Heart right ventricle (tissue), 16 donors: ENCODE measurements at regions of chr13 and their contacts with region 1.

Region 1: DNA sequence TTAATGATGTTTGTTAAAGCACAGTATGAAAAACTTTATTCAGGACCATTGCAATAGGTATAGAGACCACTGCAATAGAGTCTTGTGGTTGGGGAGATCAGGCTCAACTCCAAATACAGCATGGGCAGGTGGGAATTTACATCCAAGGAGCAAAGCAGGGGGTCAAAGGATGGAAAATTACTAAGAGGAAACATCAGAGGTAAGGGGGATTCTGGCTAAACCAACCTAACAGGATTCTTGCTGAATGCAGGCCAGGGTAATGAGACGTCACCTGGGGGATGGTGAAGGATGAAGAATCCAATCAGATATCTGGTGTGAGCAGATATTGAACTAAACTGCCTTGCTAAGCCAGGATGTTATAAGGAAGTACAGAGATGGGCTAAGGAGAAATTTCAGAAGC is 126.6 kb upstream of the MIR17HG start:
- DNase-seq: no peak
- ATAC-seq: no peak
- H3K4me3 ChIP-seq: no peak overlapping the region
- H3K27ac ChIP-seq: no peak overlapping the region
- H3K4me1 ChIP-seq: no peaks in the 10 kb centered on the region
- H3K27me3 ChIP-seq: peaks cover 0 to 6% (median 0%) of the 10 kb centered on the region in 7 donors
- CTCF ChIP-seq: no peak

Region 2: DNA sequence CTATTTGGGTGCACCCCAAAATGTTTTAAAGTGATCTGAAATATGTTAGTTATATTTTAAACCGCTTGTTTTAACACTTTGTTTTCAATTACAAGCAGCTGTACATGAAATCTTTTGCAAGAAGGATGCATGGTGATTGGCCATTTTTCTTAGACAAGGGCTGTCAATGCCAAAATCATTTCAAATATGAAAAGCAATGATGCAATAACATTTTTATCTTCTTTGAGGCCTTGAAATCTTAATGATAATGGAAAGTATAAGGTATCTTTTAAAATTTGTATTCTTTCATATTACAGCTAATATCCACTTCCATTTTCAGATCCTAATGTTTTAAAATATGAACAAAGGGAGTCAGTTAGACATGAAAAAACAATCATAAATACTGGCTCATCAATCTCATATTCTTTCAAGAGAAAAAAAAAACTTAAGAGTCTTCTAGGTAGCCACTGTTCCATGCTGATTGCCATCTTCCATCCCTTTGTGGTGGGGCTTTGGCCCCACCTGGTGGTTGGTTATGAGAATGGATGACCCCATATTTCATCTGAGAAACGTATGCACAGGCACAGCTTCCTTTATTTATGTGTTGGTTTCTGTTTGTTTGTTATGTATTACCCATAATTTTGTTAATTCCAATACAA is 203.7 kb before region 1 on chr13:
- intact Hi-C with region 1: no loop called
- DNase-seq: no peak
- ATAC-seq: peak in 1 of 8 donors; percentile 50
- H3K4me3 ChIP-seq: no peak overlapping the region
- H3K27ac ChIP-seq: no peak overlapping the region
- H3K4me1 ChIP-seq: no peaks in the 10 kb centered on the region
- H3K27me3 ChIP-seq: peaks cover 0 to 4% (median 0%) of the 10 kb centered on the region in 7 donors
- CTCF ChIP-seq: peak in 8 of 9 donors; percentile 28 to 70 (median 62)

Region 3: GRCh38 chr13:91459485-91459884 is 238.6 kb after region 1 on chr13:
- intact Hi-C with region 1: loop called in 1 of 10 experiments (anchors 5 kb)
- DNase-seq: no peak
- ATAC-seq: no peak
- H3K4me3 ChIP-seq: no peak overlapping the region
- H3K27ac ChIP-seq: no peak overlapping the region
- H3K4me1 ChIP-seq: no peaks in the 10 kb centered on the region
- H3K27me3 ChIP-seq: peaks cover 0 to 12% (median 0%) of the 10 kb centered on the region in 7 donors
- CTCF ChIP-seq: no peak